ENCODE measurements at regions of chr6 and their contacts with region 1.

Region 1: DNA sequence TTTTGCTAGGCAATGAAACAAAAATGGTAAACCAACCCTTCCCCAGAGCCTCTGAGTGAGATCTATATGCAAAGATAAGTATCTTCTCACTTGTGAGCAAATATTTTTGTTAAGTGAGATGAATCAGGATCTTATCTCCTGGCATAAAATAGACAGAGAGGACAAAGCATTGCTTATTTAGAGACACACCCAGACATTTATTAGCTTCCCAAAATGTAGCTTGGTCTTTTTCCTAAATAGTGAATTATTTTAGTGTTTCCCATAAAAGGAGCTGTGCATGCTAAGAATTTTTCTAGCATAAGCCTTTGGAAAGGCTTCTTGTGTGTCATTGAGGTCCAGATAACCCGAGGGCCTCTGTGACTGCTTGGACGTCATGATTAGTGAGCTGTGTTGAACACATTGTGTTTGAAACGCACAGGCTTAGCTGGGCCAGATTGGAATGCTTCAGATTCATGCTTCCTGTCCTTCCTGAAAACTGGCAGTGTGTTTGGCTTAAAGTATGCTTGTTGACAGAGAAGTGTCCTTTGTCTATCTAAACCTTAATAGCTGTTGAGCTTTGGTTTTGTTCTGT is 16.5 kb downstream of the MTHFD1L start:
- DNase-seq: peak; percentile 88
- H3K4me3 ChIP-seq: no peak overlapping the region
- H3K27ac ChIP-seq: peak overlapping the region; percentile 88
- H3K27me3 ChIP-seq: no peaks in the 10 kb centered on the region
- CTCF ChIP-seq: no peak

Region 2: DNA sequence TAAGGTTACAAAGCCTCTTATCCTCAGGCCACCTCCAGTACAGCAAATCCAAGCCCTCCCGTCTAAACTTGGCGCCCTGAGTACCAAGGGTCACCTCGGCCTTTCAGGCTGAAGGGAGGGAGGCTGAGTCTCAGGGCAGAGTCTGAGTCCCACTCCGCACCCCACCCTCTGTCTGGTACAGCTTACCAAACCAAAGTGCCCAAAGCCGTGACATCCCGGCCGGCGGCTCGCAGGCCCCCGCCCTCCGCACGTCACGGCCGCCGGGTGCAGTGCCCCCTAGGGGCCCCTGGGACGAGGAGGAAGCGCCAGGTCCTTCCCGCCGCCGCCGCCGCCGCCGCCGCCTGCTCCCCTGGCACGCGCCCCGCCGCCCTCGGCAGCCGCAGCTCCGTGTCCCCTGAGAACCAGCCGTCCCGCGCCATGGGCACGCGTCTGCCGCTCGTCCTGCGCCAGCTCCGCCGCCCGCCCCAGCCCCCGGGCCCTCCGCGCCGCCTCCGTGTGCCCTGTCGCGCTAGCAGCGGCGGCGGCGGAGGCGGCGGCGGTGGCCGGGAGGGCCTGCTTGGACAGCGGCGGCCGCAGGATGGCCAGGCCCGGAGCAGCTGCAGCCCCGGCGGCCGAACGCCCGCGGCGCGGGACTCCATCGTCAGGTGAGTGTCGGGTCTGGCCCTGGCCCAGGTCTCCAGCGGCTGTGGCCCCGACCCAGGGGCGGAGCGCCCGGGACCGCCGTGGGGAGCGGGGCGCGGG is 16.4 kb before region 1 on chr6 and contains the start of gene MTHFD1L:
- CTCF ChIA-PET with region 1: interaction called, 5 read pairs
- POLR2A ChIA-PET with region 1: interaction called, 11 read pairs
- DNase-seq: peak; percentile 67
- H3K4me3 ChIP-seq: peak within 1 kb of the TSS; percentile 77
- H3K27ac ChIP-seq: peak within 1 kb of the TSS; percentile 98
- H3K27me3 ChIP-seq: no peaks in the 10 kb centered on the region
- CTCF ChIP-seq: peak; percentile 47
- polyA plus RNA-seq, gene MTHFD1L: 62.4 and 69.1 TPM in 2 replicates

Measured in AG04450 (cell line).